ENCODE measurements at regions of chr5 and their contacts with region 1.

Region 1: DNA sequence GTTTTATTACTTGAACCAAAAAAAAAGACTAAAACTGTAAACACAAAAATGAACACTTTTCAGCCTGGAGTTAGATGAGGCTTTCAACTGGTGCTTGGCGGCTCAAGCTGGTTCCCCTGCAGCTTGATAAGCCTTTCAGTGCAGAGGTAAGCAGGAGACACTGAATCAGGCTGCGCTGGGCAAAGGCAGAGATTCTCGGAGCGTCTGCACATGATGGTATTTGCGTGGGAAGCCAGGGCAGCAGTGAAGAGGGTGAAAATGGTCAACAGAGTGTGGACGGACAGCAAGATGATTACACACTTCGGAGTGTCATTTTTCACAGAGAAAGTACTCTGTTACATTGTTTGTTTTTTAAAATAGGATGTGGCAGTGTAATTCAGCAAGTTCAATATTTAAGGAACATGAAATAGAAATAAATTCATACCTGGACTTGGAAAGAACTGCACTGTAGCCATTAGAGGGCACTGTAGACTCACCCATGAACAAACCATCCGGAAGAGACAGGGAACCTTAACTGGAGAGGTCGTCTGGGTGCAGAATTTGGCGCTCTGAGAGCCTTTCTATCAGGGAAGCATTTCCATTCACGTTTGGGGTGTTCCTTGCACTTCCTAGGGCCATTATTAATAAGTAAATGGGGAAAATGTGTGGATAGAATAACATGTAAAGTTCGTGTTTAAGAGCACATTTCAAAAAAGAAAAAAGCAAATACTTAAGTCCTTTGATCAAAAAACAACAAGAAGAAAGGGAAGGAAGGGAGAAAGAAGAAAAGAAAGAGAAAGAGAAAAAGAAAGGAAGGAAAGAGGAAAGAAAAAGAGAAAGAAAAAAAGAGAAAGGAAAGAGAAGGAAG is 69.8 kb downstream of the ICE1 start:
- DNase-seq: peak in 1 of 2 donors; percentile 78
- ATAC-seq: peak; percentile 49 to 56 (median 51)
- H3K4me3 ChIP-seq: no peak overlapping the region
- H3K4me3 Mint-ChIP-seq: peak overlapping the region; percentile 80
- H3K27ac ChIP-seq: no peak overlapping the region
- H3K27ac Mint-ChIP-seq: no peak overlapping the region
- H3K4me1 ChIP-seq: peaks cover 18% of the 10 kb centered on the region
- H3K4me1 Mint-ChIP-seq: peaks cover 29 to 46% of the 10 kb centered on the region in 2 donors
- H3K27me3 ChIP-seq: no peaks in the 10 kb centered on the region
- H3K27me3 Mint-ChIP-seq: peaks cover 10 to 14% of the 10 kb centered on the region in 2 donors
- CTCF ChIP-seq: peak; percentile 90

Region 2: DNA sequence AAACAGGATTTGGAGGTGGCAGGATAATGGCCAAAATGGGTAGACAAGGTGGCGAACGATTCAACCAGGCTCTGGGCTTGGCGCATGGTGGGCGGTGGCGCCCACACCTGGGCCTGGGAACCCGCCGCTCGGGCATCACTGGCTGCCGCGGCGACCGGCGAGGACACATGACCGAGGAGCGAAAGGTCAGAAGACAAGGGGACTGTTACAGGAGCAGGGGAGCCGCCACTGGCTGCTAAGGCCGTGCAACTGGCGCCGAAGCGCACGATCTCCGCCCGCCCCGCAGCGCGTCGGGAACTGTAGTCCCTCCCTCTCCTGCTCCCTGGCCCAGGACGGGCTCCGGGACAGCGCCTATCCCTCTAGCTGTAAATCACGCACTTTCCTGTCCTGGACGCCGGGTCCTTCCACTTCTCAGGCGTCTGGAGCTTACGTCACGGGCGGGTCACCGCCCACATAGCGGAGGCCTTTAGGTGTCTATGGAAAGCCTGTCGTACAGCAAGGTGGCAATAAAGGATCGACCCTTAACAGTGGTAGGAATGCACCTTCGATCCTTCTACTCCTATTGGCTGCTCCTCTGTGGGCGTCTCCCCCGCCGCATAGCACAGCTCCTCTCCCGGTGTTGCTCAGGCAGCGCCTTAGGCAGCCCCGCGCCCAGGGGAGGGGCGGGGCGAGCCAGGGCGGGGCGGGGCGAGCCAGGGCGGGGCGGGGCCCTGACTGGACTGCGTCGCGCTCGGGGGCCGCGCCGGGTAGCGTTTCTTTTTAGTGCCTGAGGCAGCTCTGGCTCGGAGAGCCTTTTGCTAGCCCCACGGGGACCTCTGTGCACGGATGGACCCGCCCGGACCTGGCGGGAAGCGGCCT is 70.1 kb before region 1 on chr5 and contains the start of gene ICE1:
- intact Hi-C with region 1: loop called (anchors 2 kb)
- DNase-seq: peak; percentile 95 to 98
- ATAC-seq: peak; percentile 88 to 95 (median 88)
- H3K4me3 ChIP-seq: peak within 1 kb of the TSS; percentile 83
- H3K4me3 Mint-ChIP-seq: no peak within 1 kb of the TSS
- H3K27ac ChIP-seq: peak within 1 kb of the TSS; percentile 100
- H3K27ac Mint-ChIP-seq: no peak within 1 kb of the TSS
- H3K4me1 ChIP-seq: peaks cover 27% of the 10 kb centered on the region
- H3K4me1 Mint-ChIP-seq: peaks cover 18 to 19% of the 10 kb centered on the region in 2 donors
- H3K27me3 ChIP-seq: no peaks in the 10 kb centered on the region
- H3K27me3 Mint-ChIP-seq: no peaks in the 10 kb centered on the region
- CTCF ChIP-seq: no peak
- total RNA-seq, gene ICE1: 29.7 to 44.5 (median 36.6) TPM

Region 3: DNA sequence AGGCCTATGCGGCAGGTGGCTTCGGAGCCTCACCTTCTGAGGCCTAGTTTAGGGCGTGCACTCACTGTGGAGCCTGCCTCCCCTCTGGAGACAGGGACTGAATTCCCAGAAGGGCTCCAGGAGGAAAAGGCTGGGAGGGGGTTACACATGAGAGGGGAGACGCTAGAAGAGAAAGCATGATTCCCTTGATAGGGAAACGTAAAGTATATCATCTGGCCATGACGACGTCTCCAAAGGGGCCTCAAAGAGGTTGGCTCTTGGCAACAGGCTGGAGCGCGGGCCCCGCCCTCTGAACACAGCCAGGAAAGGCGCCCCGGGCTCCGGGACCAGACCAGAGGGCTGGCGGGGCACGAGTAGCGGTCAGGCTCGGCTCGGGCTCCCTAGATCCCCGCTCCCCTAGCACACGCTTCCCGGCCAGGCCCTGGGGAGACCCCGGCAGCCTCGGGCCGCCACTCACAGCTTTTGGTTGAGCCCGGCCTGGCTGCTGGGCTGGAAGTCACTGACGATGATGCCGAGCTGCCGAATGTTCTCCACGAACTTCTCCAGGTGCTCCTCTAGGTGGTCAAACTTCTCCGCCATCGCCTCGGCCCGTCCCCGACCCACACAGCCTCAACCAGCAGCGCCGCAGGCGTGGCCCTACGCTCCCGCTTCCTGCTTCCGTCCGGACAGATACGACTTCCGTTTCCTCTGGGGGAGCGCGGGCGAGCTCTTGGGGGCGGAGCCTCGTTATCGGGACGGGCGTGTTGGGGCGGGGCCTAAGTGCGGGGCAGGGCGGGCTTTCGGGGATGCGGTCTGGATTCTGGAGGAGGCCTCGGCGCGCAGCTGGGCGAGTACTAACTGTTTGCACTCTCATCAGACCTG is 885.8 kb after region 1 on chr5 and contains the start of gene MED10:
- intact Hi-C with region 1: loop called (anchors 10 kb)
- DNase-seq: peak; percentile 82 to 96
- ATAC-seq: peak; percentile 99
- H3K4me3 ChIP-seq: peak within 1 kb of the TSS; percentile 79
- H3K4me3 Mint-ChIP-seq: peak within 1 kb of the TSS; percentile 99
- H3K27ac ChIP-seq: peak within 1 kb of the TSS; percentile 71
- H3K27ac Mint-ChIP-seq: peak within 1 kb of the TSS; percentile 94 to 96
- H3K4me1 ChIP-seq: peaks cover 20% of the 10 kb centered on the region
- H3K4me1 Mint-ChIP-seq: peaks cover 48 to 54% of the 10 kb centered on the region in 2 donors
- H3K27me3 ChIP-seq: no peaks in the 10 kb centered on the region
- H3K27me3 Mint-ChIP-seq: peaks cover 6 to 19% of the 10 kb centered on the region in 2 donors
- CTCF ChIP-seq: no peak
- total RNA-seq, gene MED10: 64.4 to 68.5 (median 64.5) TPM

Region 4: GRCh38 chr5:6576861-6577501 is 1084.7 kb after region 1 on chr5:
- intact Hi-C with region 1: loop called (anchors 10 kb)
- DNase-seq: peak in 1 of 2 donors; percentile 38
- ATAC-seq: no peak
- H3K4me3 ChIP-seq: no peak overlapping the region
- H3K4me3 Mint-ChIP-seq: no peak overlapping the region
- H3K27ac ChIP-seq: no peak overlapping the region
- H3K27ac Mint-ChIP-seq: no peak overlapping the region
- H3K4me1 ChIP-seq: no peaks in the 10 kb centered on the region
- H3K4me1 Mint-ChIP-seq: no peaks in the 10 kb centered on the region
- H3K27me3 ChIP-seq: no peaks in the 10 kb centered on the region
- H3K27me3 Mint-ChIP-seq: peaks cover 9 to 24% of the 10 kb centered on the region in 2 donors
- CTCF ChIP-seq: no peak

Region 5: DNA sequence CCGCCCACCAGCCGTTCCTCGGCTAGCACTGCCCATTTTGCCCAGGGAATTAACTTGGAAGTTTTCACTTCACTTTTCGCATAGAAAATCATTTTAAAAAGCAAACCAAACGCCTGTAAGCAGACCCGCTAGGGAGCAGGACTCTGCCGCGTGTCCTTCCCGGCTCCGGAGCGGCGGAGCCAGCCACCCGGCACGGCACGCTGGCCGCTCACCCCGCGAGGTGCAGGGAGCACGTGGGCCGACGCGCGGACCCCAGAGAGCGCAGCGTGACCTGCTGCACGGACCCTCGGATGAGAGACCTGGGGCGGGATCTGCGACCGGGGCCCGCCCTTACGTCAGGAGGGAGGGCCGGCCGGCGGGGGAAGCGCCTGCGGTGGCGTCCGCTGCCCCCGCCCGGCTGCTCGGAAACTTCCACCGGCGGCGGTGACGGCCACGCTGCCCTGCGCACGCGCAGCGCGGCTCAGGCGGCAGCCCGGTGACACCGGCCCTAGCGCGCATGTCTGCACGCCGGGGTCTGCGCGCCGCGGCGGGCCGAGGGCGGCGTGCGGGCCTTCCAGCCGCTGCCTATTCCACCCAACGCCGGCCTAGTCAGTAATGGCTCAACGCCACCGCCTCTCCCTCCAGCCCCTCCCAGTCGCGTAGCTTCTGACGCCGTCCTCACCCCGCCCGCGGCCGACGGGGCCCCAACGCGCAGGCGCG is 1220.4 kb after region 1 on chr5:
- intact Hi-C with region 1: loop called (anchors 5 kb)
- DNase-seq: peak in 1 of 2 donors; percentile 97
- ATAC-seq: peak; percentile 75 to 89 (median 75)
- H3K4me3 ChIP-seq: peak overlapping the region; percentile 49
- H3K4me3 Mint-ChIP-seq: peak overlapping the region; percentile 91
- H3K27ac ChIP-seq: peak overlapping the region; percentile 80
- H3K27ac Mint-ChIP-seq: peak overlapping the region; percentile 88 to 89
- H3K4me1 ChIP-seq: peaks cover 36% of the 10 kb centered on the region
- H3K4me1 Mint-ChIP-seq: peaks cover 36 to 45% of the 10 kb centered on the region in 2 donors
- H3K27me3 ChIP-seq: peaks cover 2% of the 10 kb centered on the region
- H3K27me3 Mint-ChIP-seq: peaks cover 7 to 8% of the 10 kb centered on the region in 2 donors
- CTCF ChIP-seq: no peak

Region 6: DNA sequence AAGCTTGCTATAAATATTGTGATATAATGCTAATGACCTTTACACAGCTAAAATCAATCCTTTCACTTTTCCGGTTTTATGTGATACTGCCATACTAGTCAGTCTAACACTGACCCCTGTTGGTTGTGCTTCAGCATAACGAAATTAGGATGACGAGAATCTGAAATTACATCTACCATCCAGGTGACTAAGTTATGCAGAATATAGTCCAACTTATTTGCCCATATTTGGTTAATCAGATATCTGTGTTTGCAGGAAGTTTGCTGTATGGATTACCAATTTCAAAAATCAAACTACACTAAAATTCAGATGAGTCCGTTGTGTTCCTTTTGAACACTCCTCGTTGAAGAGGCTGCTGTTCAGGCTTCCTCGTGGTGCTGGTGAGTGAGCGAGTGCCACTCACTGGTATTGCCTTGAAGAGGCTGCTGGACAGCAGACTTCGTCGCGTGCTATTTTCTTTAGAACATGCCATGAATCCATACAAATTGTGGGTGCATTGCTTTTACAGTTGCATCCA is 1253.5 kb after region 1 on chr5:
- intact Hi-C with region 1: loop called (anchors 1 kb)
- DNase-seq: peak in 1 of 2 donors; percentile 78
- ATAC-seq: peak; percentile 65 to 71 (median 67)
- H3K4me3 ChIP-seq: no peak overlapping the region
- H3K4me3 Mint-ChIP-seq: no peak overlapping the region
- H3K27ac ChIP-seq: no peak overlapping the region
- H3K27ac Mint-ChIP-seq: no peak overlapping the region
- H3K4me1 ChIP-seq: peaks cover 8% of the 10 kb centered on the region
- H3K4me1 Mint-ChIP-seq: peaks cover 4 to 6% of the 10 kb centered on the region in 2 donors
- H3K27me3 ChIP-seq: no peaks in the 10 kb centered on the region
- H3K27me3 Mint-ChIP-seq: no peaks in the 10 kb centered on the region
- CTCF ChIP-seq: peak; percentile 70

Measured in natural killer cell (primary cell).